Aorta (tissue), 5 donors: ENCODE measurements at regions of chr10 and their contacts with region 1.

Region 1: DNA sequence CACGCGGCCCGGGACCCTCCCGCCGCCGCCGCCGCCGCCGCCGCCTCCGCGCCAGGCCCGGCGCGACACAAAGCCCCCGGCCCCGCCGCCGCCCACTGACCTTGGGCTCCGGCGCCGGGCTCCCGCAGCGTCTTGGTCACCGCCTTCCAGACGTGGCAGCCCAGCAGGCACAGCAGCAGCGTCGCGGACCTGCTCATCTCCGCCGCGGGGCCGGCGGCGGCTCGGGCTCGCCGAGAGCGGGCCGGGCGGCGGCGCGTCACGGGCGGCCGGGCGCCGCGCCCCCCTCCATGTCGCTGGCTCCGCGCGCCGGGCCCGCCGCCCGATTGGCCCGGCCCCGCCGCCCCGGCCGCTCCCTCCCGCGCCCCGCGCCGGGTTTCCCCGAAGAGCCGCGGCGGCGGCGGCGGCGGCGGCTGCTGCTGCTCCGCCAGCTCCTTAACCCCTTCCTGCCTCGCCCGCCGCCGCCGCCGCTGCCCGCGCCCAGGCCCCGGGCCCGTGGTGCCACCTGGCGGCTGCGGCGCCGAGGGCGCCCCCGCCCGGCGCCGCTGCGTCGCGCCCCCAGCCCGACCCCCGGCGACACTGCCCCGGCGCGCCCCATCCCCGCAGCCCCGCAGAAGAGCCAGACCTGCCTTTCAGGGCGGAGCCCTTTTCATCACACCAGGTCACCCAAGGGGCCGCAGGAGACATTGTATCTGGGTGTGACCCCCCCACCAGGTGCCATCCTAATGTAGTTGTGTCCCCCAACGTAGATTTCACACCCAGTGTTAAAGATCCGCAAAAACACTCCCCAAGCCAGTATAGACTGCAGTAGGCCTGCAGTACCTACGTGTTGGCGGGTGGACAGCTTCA is at the start of gene FAM171A1:
- DNase-seq: peak; percentile 53 to 85
- ATAC-seq: peak; percentile 72
- H3K4me3 ChIP-seq: peak within 1 kb of the TSS; percentile 95 to 100
- H3K27ac ChIP-seq: no peak within 1 kb of the TSS
- H3K4me1 ChIP-seq: no peaks in the 10 kb centered on the region
- H3K27me3 ChIP-seq: no peaks in the 10 kb centered on the region
- total RNA-seq, gene FAM171A1: 11.2 to 21.4 TPM

Region 2: GRCh38 chr10:15209827-15210509 is 161.1 kb before region 1 on chr10:
- intact Hi-C with region 1: loop called (anchors 5 kb)
- DNase-seq: peak; percentile 85 to 88
- ATAC-seq: peak; percentile 79
- H3K4me3 ChIP-seq: no peak overlapping the region
- H3K27ac ChIP-seq: no peak overlapping the region
- H3K4me1 ChIP-seq: peaks cover 0 to 3% of the 10 kb centered on the region in 2 donors
- H3K27me3 ChIP-seq: no peaks in the 10 kb centered on the region

Region 3: DNA sequence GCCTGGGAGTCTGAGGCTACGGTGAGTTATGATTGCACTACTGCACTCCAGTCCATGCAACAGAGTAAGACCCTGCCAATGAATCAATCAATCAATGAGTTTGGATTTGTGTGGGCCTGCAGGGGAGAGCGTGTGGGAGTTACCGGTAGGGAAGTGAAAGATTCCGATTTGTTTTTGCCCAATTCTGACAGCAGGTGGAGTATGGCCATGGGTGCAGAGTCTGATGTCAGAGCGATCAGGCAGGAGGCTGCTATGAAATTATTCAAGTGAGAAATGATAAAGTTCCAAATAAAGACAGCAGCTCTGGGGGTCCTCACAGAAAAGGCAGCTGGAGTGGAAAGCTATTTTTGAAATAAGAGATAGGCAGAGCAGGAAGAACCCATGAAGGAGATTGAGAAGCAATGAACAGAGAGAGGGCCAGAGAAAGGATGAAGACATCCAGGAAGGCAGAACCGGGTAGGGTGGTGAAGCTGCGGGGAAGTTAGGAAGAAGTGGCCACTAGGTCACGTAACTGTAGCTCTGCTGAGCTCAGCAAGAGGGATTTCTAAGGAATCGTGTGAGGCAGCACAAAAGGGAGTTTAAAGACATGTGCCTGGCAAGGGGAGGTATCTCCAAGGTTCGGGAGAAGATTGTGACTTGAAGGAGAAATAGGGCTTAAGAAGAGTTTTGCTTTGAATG is 108.9 kb before region 1 on chr10:
- intact Hi-C with region 1: loop called in 1 of 2 experiments (anchors 2 kb)
- DNase-seq: no peak
- ATAC-seq: peak; percentile 66
- H3K4me3 ChIP-seq: no peak overlapping the region
- H3K27ac ChIP-seq: no peak overlapping the region
- H3K4me1 ChIP-seq: no peaks in the 10 kb centered on the region
- H3K27me3 ChIP-seq: no peaks in the 10 kb centered on the region

Region 4: GRCh38 chr10:15313843-15314242 is 57.2 kb before region 1 on chr10:
- intact Hi-C with region 1: no loop called
- DNase-seq: no peak
- ATAC-seq: no peak
- H3K4me3 ChIP-seq: no peak overlapping the region
- H3K27ac ChIP-seq: no peak overlapping the region
- H3K4me1 ChIP-seq: peaks cover 0 to 3% of the 10 kb centered on the region in 2 donors
- H3K27me3 ChIP-seq: no peaks in the 10 kb centered on the region

Region 5: GRCh38 chr10:15344876-15345285 is 26.2 kb before region 1 on chr10:
- intact Hi-C with region 1: no loop called
- DNase-seq: no peak
- ATAC-seq: no peak
- H3K4me3 ChIP-seq: no peak overlapping the region
- H3K27ac ChIP-seq: no peak overlapping the region
- H3K4me1 ChIP-seq: no peaks in the 10 kb centered on the region
- H3K27me3 ChIP-seq: no peaks in the 10 kb centered on the region

Region 6: GRCh38 chr10:15461353-15462108 is 90.5 kb after region 1 on chr10:
- intact Hi-C with region 1: no loop called
- DNase-seq: peak in 1 of 2 donors; percentile 58
- ATAC-seq: peak; percentile 80
- H3K4me3 ChIP-seq: no peak overlapping the region
- H3K27ac ChIP-seq: peak overlapping the region in 1 of 2 donors; percentile 88
- H3K4me1 ChIP-seq: peaks cover 0 to 12% of the 10 kb centered on the region in 2 donors
- H3K27me3 ChIP-seq: no peaks in the 10 kb centered on the region

Region 7: DNA sequence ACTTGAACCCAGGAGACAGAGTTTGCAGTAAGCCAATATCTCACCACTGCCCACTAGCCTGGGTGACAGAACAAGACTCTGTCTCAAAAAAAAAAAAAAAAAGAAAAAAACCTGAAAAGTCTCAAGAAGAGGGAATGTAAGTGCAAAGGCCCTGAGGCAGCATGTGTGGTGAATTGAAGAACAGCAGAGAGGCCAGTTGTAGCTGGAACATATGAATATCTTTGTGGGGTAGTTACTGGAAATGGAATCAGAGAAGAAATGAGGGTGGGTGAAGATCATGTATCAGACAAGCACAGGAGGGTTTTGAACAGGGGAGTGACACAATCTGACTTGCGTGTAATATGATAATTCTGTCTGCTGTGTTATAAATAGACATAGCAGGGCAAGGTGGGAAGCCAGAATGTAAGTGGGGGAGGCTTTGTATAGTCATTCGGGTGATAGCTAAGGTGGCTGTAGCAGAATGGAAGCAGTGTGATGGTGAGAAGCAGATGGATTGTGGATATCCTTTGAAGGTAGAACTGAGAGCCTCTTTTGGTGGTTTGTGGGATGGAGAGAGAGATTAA is 393.9 kb after region 1 on chr10:
- intact Hi-C with region 1: no loop called
- DNase-seq: no peak
- ATAC-seq: no peak
- H3K4me3 ChIP-seq: no peak overlapping the region
- H3K27ac ChIP-seq: no peak overlapping the region
- H3K4me1 ChIP-seq: no peaks in the 10 kb centered on the region
- H3K27me3 ChIP-seq: no peaks in the 10 kb centered on the region